ENCODE measurements at regions of chr11 and their contacts with region 1.

Region 1: DNA sequence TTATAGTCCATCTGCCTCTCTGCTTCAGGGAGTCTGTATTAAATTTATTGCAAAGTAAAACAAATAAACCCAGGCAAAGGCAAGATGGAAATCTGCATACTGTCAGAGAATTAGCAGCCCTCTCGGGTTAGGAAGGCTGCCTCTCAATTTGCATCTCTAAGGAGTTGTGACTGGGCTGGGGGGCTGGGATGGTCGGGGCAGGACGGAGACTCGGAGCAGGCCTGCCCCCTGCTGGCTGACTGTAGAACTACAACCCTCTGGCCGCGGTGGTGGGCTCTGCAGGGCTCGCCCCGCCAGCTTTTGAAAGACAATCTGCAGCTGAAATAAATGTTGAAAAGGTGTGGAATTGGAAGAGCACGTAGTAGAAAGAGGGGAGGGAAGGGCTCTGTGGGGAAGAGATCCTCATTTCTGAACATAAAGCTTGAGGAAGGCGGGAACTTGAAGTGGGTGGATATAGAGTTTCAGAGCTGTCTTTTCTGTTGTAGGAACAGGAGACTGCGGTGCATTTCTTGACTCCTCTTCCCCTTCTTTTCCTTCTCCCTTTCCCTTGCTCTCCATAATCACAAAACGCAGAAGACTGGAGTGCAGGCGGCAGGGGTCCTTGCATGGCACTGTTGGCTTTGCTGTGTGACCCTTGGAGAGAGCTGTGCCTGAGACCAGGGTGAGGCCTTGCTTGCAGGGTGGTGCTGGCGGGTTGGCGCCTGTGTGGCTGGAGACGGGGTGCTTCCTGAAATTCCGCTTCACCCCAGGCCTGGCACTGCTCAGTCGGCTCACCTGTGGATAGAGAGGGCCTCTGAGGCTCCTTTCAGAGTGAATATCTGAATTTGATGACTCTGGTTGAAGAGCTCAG is 22.6 kb upstream of the PKNOX2 start:
- DNase-seq: peak; percentile 40 to 64
- ATAC-seq: peak; percentile 76 to 91 (median 84)
- H3K4me3 ChIP-seq: no peak overlapping the region
- H3K27ac ChIP-seq: no peak overlapping the region
- H3K4me1 ChIP-seq: no peaks in the 10 kb centered on the region
- H3K27me3 ChIP-seq: peaks cover 0 to 15% (median 0%) of the 10 kb centered on the region in 3 donors
- CTCF ChIP-seq: peak; percentile 95

Region 2: DNA sequence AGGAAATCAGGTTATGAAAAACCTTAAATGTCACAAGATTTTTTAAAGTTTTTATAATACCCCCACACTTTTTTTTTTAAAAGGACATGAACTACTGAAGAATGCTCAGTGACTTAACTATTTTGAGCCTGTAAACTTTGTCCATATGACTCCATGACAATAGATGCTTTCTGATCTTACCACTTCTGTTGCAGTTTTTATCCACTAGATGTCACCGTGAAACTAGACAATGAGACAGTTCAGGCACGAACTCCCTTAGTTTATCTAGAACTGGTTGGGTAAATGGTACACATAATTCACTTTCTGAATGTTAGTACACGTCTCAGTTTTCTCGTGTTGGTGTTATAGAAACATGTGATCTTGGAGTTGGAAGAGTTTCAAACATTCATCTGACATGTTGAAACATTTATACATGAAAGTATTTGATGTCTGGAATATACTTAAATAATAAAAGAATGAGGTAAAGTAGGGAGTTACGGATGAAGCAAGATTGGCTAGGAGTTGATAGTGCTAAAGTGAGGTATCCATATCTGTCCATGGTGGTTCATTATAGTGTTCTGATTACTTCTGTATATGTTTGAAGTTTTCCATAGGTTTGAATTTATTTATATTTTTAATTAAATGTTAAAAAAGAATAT is 179.8 kb before region 1 on chr11:
- intact Hi-C with region 1: loop called (anchors 2 to 10 kb)
- DNase-seq: no peak
- ATAC-seq: peak; percentile 60 to 89 (median 78)
- H3K4me3 ChIP-seq: no peak overlapping the region
- H3K27ac ChIP-seq: no peak overlapping the region
- H3K4me1 ChIP-seq: no peaks in the 10 kb centered on the region
- H3K27me3 ChIP-seq: no peaks in the 10 kb centered on the region
- CTCF ChIP-seq: peak; percentile 70

Region 3: DNA sequence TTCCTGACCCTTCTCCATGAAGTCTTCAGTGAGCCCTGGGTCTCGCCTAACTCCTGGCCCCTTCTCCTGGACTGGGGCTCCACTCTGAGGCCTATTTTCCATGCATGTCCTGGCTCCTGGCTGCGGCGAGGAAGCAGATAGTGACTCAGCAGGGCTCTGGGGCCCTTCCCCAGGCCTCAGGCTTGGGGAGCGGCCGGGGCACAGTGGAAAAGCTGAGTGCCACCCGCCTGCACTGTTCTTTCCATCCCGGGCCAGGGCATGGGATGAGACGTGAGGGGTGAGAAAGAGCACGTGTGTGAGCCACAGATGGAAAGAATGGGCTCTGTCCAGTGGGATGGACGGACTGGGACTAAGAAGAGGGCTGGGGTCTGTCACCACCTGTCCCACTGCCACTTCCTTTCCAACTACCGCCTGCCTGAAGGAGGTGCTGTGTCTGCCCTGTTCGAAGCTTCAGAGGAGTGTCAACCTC is 66.0 kb before region 1 on chr11:
- intact Hi-C with region 1: no loop called
- DNase-seq: no peak
- ATAC-seq: no peak
- H3K4me3 ChIP-seq: no peak overlapping the region
- H3K27ac ChIP-seq: no peak overlapping the region
- H3K4me1 ChIP-seq: no peaks in the 10 kb centered on the region
- H3K27me3 ChIP-seq: no peaks in the 10 kb centered on the region
- CTCF ChIP-seq: no peak

Region 4: DNA sequence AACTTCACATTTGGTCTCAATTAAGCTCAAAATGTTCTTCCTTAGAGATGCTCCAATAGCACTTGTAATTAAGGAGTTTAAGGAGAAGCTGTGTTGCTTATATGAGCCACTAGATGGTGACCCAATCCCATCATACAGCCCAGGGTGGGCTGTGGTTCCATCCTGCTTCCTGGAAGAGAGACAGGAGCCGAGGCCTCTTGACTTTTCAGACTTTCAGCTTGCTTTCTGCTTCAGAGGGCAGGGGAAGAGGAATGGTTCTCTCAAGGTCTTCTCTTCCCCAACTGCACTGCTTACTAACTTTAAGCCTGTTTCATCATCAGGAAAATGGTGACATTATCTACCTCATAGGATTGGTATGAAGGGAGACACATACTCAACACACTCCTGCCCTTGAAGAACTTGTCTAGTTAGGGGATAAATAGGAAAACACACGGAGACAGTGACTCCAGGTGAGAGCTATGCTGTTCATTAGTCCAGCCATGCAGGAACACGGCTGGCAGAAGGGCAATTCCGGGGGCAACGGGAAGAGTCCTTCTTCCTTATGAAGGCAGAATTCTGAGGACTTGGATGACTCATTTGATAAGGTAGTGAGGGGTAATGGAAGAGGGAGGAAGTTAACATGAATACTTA is 50.5 kb before region 1 on chr11:
- intact Hi-C with region 1: loop called (anchors 5 kb)
- DNase-seq: no peak
- ATAC-seq: peak; percentile 73 to 80 (median 74)
- H3K4me3 ChIP-seq: no peak overlapping the region
- H3K27ac ChIP-seq: no peak overlapping the region
- H3K4me1 ChIP-seq: peaks cover 8% of the 10 kb centered on the region
- H3K27me3 ChIP-seq: no peaks in the 10 kb centered on the region
- CTCF ChIP-seq: peak; percentile 63

Region 5: DNA sequence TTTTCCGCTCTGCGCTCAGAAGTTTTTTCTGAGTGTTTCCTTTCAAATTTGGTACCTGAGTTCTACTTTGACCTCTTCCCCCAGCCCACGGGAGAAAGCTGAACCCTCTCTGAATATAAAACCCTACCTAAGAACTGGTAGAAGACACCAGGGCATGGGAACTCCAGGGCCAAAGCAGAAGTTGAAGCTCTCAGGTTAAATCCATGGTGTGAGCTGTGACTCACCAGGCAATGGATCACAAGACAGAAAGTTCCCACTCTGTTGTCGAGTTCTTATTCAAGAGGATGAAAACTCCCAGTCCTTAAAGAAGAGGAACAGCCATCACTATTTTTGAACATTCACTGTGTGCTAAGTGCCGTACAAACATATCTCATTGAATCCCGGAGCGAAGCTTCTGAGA is 39.4 kb before region 1 on chr11:
- intact Hi-C with region 1: no loop called
- DNase-seq: no peak
- ATAC-seq: no peak
- H3K4me3 ChIP-seq: no peak overlapping the region
- H3K27ac ChIP-seq: no peak overlapping the region
- H3K4me1 ChIP-seq: peaks cover 12% of the 10 kb centered on the region
- H3K27me3 ChIP-seq: no peaks in the 10 kb centered on the region
- CTCF ChIP-seq: no peak

Measured in psoas muscle (tissue), 8 donors.